Dorsolateral prefrontal cortex (tissue), 120 donors: ENCODE measurements at regions of chr16 and their contacts with region 1.

Region 1: GRCh38 chr16:78770353-78771091 is 671.1 kb downstream of the WWOX start:
- DNase-seq: peak; percentile 20 to 81 (median 69)
- H3K4me3 ChIP-seq: peak overlapping the region in 6 of 59 donors; percentile 2 to 28 (median 23)
- H3K27ac ChIP-seq: peak overlapping the region in 1 of 59 donors; percentile 15
- H3K27me3 ChIP-seq: no peaks in the 10 kb centered on the region
- CTCF ChIP-seq: peak; percentile 56 to 92 (median 84)

Region 2: DNA sequence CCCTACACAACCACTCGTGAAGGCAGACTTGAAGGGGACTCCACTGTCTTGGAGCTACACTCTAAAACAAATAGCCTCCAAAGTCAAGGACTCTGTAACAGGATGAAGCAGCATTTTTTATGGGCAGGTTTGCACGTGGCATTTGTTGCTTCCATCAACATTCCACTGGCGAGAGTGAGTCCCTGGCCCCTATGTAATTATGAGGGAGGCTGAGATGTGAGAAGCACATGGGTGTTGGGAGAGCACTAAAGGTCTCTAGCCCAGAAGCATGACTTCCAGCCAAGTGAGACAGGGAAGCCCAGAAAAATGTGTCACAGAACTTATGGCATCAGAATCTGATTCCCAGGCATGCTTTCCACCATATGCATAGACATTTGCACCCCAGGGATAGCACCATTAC is 428.2 kb before region 1 on chr16:
- intact Hi-C with region 1: no loop called
- DNase-seq: no peak
- H3K4me3 ChIP-seq: no peak overlapping the region
- H3K27ac ChIP-seq: no peak overlapping the region
- H3K27me3 ChIP-seq: no peaks in the 10 kb centered on the region
- CTCF ChIP-seq: no peak

Region 3: DNA sequence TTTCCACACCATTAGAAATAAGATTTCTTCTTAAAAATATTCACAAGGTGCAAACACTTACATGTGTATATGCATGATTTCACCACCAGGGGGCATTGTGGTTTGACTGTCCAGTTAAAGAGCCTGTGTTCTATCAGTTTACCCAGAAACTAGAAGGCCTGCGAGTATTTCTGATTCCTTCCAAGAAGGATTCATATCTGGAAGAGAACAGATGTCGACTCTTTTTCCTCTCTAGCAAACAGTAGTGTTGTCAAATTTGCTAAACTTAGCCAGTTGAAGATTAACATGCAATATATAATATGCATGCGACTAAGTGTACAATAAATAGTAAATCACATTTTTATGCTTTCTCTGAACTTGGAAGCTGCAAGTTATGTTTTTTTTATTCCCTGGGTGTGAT is 266.9 kb before region 1 on chr16:
- intact Hi-C with region 1: loop called (anchors 2 to 5 kb)
- DNase-seq: peak in 4 of 10 donors; percentile 36 to 84 (median 60)
- H3K4me3 ChIP-seq: no peak overlapping the region
- H3K27ac ChIP-seq: peak overlapping the region in 4 of 59 donors; percentile 11 to 61 (median 40)
- H3K27me3 ChIP-seq: no peaks in the 10 kb centered on the region
- CTCF ChIP-seq: peak; percentile 86 to 98 (median 94)

Region 4: DNA sequence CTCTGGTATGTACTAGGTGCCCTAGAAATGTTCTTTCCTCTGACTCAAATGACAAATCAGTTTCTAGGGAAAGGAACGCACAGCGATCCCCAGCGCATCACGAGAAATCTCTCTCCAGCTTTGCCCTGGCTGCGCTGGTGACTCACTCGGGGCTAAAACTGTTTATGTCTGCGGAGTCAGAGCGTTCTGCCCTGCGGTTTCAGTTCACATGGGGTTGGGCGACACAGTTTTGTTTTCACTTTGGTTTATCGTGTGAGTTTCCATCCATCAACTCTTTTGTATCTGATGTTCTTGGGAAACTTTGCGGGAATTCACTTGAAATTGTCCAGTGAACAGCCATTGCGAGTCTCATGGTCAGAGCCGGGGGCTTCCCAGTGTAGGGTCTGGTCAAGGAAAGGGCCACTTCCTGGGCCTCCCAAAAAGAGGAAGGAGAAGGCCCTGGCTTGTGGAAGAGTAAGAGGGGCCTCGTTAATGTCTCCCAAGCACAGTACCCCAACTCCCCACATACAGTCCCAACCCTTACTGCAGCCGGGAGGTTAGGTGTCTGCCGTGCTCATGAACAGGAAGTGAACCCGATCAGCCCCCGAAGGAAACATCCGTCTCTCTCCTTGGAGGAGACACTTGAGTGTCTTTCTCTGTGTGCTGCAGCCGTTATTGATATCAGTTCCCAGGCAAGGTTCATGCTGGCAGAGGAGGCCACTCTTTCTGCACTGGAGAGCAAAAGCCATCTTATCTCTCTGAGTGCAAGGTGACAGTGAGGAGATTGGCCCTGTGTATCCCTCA is 27.8 kb before region 1 on chr16:
- intact Hi-C with region 1: no loop called
- DNase-seq: no peak
- H3K4me3 ChIP-seq: peak overlapping the region in 1 of 59 donors; percentile 21
- H3K27ac ChIP-seq: peak overlapping the region in 1 of 59 donors; percentile 5
- H3K27me3 ChIP-seq: peaks cover 0 to 3% (median 0%) of the 10 kb centered on the region in 45 donors
- CTCF ChIP-seq: no peak